Cardiac septum (tissue), 1 donor: ENCODE measurements at regions of chr13 and their contacts with region 1.

Region 1: DNA sequence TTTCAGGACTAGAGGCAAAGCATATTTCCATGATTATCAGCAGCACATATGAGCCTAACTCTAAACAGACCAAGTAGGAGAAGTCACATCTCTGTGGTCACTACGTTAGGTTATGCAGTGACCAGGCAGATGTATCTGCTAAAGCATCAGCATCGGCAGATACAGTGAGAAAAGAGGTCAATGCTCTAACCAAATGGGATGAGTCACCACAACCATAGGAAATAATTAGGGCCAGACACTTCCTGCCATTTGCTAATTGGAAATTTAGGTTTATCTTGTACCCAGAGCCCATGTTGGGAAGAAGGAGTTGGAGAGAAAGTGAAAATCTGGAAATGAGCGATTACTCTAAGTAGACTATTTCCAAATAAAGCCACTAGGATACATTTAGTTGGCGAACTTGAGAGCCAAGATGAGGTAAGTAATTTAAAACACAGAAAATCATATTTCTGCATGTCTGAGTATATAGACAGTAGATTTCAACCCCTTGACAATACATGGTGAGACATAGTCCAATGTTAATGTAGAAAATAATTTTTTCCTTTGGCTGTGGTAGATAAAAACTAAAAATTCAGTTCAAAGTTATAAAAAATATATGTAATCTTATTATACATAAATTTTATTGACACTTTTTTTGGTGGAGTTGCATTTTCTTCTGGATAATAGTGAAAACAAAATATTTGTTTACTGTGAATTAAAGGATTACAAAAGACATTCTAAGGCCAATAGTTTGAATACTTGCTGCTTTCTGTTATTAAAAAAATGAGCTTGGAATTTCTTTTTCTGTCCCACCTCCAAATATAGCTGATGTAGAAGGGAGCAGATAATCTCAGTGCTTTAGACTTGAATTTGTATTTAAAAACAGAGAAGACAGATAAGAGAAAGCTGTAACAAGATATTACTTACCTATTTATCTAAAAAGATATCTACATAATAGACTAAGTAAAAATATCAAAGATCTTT is 104.4 kb upstream of the CSNK1A1L start:
- DNase-seq: no peak

Region 2: GRCh38 chr13:37134411-37135041 is 75.4 kb before region 1 on chr13:
- intact Hi-C with region 1: loop called (anchors 5 kb)
- DNase-seq: no peak

Region 3: DNA sequence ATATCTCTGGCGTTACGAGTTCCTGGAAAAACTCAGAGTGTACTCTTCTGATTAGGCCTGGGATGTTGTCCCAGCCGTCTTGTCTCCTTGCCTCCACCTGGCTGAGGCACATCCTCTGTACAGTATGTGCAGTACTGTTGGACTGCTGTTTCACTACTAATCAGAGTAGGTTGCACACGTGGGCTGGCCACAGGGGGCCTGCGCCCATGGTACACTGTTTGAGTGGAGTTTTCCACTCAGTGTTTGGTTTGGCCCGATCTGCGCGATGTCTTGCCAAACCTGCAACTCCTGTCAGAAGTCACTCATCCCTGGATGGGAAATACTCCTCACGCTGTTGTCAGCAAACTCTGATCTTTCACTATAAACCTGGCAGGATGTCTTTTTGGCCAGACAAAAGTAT is 85.2 kb after region 1 on chr13:
- intact Hi-C with region 1: no loop called
- DNase-seq: peak; percentile 84

Region 4: DNA sequence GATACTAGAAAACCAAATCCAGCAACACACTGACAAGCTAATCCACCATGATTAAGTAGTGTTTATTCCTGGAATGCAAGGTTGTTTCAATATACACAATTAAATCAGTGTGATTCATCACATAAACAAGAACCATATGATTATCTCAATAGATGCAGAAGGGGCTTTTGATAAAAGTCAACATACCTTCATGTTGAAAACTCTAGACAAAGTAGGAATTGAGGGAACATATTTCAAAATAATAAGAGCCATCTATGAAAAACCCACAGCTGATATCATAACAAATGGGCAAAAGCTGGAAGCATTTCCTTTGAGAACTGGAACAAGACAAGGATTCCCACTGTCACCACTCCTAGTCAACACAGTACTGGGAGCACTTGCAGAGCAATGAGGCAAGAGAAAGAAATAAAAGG is 109.1 kb after region 1 on chr13:
- intact Hi-C with region 1: no loop called
- DNase-seq: no peak